Prostate gland (tissue), 2 donors: ENCODE measurements at regions of chr12 and their contacts with region 1.

Region 1: DNA sequence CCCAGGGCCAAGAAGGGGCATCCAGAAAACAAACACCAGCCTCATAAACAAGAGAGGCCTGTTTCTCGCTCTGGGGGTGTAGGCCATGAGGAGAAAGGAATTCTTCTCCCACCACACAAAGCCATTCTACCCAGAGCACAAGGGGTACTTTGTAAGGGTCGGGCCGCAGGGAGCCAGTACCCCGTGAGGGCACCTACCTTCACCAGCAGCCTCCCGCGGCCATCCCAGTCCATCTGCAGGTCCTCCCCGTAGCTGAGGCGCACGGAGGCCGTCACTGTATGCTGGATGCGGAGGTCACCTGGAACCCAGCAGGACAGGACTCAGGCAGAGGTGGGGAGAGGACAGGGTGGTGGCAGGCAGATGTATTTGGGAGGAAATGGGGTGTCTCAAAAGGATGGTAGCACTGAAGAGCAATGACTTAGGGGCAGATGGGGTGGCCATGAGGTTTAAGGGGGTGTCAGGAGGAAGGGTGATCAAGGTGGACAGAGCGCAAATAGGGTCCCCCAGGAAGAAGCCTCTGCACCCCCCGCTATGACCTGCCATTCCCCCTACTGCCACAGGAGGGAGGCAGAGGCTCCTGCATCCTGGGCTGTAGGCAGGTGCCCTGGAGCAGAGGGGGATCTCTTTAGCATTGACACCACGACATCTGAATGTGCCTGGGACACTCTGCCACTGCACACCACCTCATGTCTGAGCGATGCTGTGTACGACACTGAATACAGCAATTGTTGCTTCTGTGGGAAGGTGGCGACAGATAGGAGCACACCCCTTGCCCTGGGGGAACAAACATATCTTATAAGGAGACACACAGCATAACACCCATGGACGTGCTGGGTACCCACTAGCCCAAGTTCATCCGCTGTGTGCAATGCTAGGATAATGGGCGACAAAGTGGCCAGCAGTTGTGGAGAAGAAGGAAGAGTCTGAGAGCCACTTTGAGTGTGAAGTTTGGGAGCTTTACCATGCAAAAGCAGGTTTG is 61.4 kb downstream of the VWF start:
- DNase-seq: peak; percentile 45
- H3K4me3 ChIP-seq: no peak overlapping the region
- H3K27ac ChIP-seq: no peak overlapping the region
- H3K4me1 ChIP-seq: no peaks in the 10 kb centered on the region
- H3K27me3 ChIP-seq: no peaks in the 10 kb centered on the region
- CTCF ChIP-seq: peak; percentile 66 to 94 (median 82)
- POLR2A ChIP-seq: no peak

Region 2: GRCh38 chr12:5898876-5899275 is 164.2 kb before region 1 on chr12:
- intact Hi-C with region 1: no loop called
- DNase-seq: no peak
- H3K4me3 ChIP-seq: no peak overlapping the region
- H3K27ac ChIP-seq: no peak overlapping the region
- H3K4me1 ChIP-seq: no peaks in the 10 kb centered on the region
- H3K27me3 ChIP-seq: no peaks in the 10 kb centered on the region
- CTCF ChIP-seq: no peak
- POLR2A ChIP-seq: no peak

Region 3: GRCh38 chr12:6187948-6188793 is 125.1 kb after region 1 on chr12:
- intact Hi-C with region 1: loop called (anchors 5 kb)
- DNase-seq: no peak
- H3K4me3 ChIP-seq: no peak overlapping the region
- H3K27ac ChIP-seq: no peak overlapping the region
- H3K4me1 ChIP-seq: no peaks in the 10 kb centered on the region
- H3K27me3 ChIP-seq: no peaks in the 10 kb centered on the region
- CTCF ChIP-seq: no peak
- POLR2A ChIP-seq: no peak

Region 4: GRCh38 chr12:6285063-6285477 is 222.0 kb after region 1 on chr12:
- intact Hi-C with region 1: loop called (anchors 2 kb)
- DNase-seq: peak; percentile 58
- H3K4me3 ChIP-seq: no peak overlapping the region
- H3K27ac ChIP-seq: no peak overlapping the region
- H3K4me1 ChIP-seq: no peaks in the 10 kb centered on the region
- H3K27me3 ChIP-seq: no peaks in the 10 kb centered on the region
- CTCF ChIP-seq: peak; percentile 92 to 95 (median 94)
- POLR2A ChIP-seq: no peak